MCF 10A (cell line): ENCODE measurements at regions of chr6 and their contacts with region 1.

Region 1: DNA sequence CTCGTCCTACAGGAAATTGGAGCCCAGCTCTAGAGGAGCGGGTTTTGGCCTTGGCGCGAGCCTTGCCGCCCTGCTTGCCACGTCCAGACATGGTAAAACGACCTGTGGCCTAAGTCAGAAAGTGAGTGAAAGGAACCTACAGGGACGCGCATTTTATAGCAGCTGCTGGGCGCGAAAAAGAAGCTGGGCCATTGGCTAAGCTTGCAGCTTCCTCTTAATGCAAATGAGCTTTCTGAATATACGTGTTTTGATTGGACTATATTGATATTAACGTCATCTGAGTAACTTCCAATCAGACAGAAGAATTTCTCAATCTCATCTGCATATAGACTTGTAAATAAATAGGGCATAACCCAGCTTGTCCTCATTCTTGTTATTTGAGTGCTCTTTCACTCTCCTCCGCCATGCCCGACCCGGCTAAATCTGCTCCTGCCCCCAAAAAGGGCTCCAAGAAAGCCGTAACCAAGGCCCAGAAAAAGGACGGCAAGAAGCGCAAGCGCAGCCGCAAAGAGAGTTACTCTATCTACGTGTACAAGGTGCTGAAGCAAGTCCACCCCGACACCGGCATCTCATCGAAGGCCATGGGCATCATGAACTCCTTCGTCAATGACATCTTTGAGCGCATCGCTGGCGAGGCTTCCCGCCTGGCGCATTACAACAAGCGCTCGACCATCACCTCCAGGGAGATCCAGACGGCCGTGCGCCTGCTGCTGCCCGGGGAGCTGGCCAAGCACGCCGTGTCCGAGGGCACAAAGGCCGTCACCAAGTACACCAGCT is 18.9 kb downstream of the OR2B2 start:
- DNase-seq: peak; percentile 98
- H3K4me3 Mint-ChIP-seq: no peak overlapping the region
- H3K27ac Mint-ChIP-seq: no peak overlapping the region
- H3K4me1 Mint-ChIP-seq: peaks cover 12% of the 10 kb centered on the region
- H3K27me3 Mint-ChIP-seq: no peaks in the 10 kb centered on the region
- CTCF ChIP-seq: no peak

Region 2: GRCh38 chr6:27132532-27133280 is 760.5 kb before region 1 on chr6:
- CTCF ChIA-PET with region 1: interaction called, 3 read pairs
- POLR2A ChIA-PET with region 1: interaction called, 82 read pairs
- intact Hi-C with region 1: loop called (anchors 1 kb)
- DNase-seq: peak; percentile 99
- H3K4me3 Mint-ChIP-seq: no peak overlapping the region
- H3K27ac Mint-ChIP-seq: no peak overlapping the region
- H3K4me1 Mint-ChIP-seq: peaks cover 11% of the 10 kb centered on the region
- H3K27me3 Mint-ChIP-seq: no peaks in the 10 kb centered on the region
- CTCF ChIP-seq: no peak

Region 3: DNA sequence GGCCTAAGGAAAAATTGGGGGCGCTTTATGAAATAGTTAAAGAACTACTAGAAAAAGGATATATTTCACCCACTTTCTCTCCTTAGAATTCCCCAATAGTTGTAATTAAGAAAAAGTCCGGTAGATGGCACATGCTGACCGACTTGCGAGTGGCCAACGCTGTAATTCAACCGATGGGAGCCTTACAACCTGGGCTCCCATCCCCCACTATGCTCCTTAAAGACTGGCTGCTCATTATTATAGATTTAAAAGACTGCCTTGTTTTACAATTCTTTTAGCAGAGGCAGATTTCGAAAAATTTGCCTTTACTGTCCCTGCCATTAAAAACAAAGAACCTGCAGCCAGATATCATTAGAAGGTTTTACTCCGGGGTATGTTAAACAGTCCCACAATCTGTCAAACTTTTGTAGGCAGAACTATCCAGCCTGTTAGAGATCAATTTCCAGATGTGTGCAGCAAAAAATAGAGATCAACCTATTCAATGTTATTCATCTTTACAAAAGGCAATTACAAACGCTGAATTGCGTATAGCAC is 704.3 kb before region 1 on chr6:
- CTCF ChIA-PET with region 1: interaction called, 3 read pairs
- POLR2A ChIA-PET with region 1: interaction called, 11 read pairs
- intact Hi-C with region 1: loop called (anchors 2 kb)
- DNase-seq: peak; percentile 88
- H3K4me3 Mint-ChIP-seq: peak overlapping the region; percentile 82
- H3K27ac Mint-ChIP-seq: peak overlapping the region; percentile 53
- H3K4me1 Mint-ChIP-seq: no peaks in the 10 kb centered on the region
- H3K27me3 Mint-ChIP-seq: no peaks in the 10 kb centered on the region
- CTCF ChIP-seq: peak; percentile 80

Region 4: GRCh38 chr6:27687154-27688013 is 205.9 kb before region 1 on chr6:
- CTCF ChIA-PET with region 1: no interaction called
- POLR2A ChIA-PET with region 1: no interaction called
- intact Hi-C with region 1: no loop called
- DNase-seq: peak; percentile 87
- H3K4me3 Mint-ChIP-seq: peak overlapping the region; percentile 92
- H3K27ac Mint-ChIP-seq: peak overlapping the region; percentile 89
- H3K4me1 Mint-ChIP-seq: peaks cover 5% of the 10 kb centered on the region
- H3K27me3 Mint-ChIP-seq: no peaks in the 10 kb centered on the region
- CTCF ChIP-seq: peak; percentile 86

Region 5: GRCh38 chr6:27700337-27700736 is 192.9 kb before region 1 on chr6:
- CTCF ChIA-PET with region 1: no interaction called
- POLR2A ChIA-PET with region 1: no interaction called
- intact Hi-C with region 1: no loop called
- DNase-seq: no peak
- H3K4me3 Mint-ChIP-seq: no peak overlapping the region
- H3K27ac Mint-ChIP-seq: no peak overlapping the region
- H3K4me1 Mint-ChIP-seq: peaks cover 6% of the 10 kb centered on the region
- H3K27me3 Mint-ChIP-seq: no peaks in the 10 kb centered on the region
- CTCF ChIP-seq: no peak

Region 6: DNA sequence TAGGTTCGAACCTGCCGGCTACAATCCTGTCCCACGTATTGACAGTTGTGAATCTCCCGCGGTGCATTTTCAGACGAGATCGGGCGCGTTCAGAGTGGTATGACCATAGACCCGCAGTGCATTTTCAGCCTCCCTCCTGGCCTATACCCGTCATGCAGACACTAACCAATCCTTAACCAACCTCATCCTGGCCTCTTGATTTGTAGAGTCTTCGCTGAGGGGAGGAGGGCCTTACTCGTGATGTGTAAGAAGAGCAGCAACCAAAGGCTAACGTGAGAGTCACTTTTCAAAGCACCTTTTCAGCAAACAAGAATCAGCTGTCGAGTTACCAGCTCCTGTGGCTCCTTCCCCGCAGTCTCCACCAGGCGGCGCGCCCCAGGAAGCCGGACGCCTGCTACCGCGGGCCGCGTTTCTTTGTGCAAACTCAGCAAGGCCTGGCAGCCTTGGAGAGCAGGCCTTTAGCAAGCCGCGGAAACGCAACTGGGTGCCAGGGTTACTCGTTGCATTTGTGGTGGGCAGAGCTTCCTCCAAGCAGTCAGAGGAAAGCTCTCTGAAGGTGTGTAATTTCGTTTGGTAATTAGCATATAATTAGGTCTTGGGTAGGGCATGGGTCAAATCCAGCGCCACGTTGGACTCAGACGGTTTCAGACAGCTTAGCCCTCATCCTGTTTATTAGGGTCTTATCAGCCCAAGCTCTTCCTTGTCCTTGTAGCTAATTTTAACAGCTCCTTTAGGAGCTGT is 120.8 kb before region 1 on chr6:
- CTCF ChIA-PET with region 1: interaction called, 9 read pairs
- POLR2A ChIA-PET with region 1: interaction called, 16 read pairs
- intact Hi-C with region 1: no loop called
- DNase-seq: peak; percentile 87
- H3K4me3 Mint-ChIP-seq: peak overlapping the region; percentile 53
- H3K27ac Mint-ChIP-seq: no peak overlapping the region
- H3K4me1 Mint-ChIP-seq: peaks cover 9% of the 10 kb centered on the region
- H3K27me3 Mint-ChIP-seq: no peaks in the 10 kb centered on the region
- CTCF ChIP-seq: peak; percentile 89

Region 7: GRCh38 chr6:27825025-27825793 is 68.0 kb before region 1 on chr6:
- CTCF ChIA-PET with region 1: interaction called, 74 read pairs
- POLR2A ChIA-PET with region 1: interaction called, 592 read pairs
- intact Hi-C with region 1: no loop called
- DNase-seq: no peak
- H3K4me3 Mint-ChIP-seq: peak overlapping the region; percentile 94
- H3K27ac Mint-ChIP-seq: peak overlapping the region; percentile 95
- H3K4me1 Mint-ChIP-seq: peaks cover 10% of the 10 kb centered on the region
- H3K27me3 Mint-ChIP-seq: no peaks in the 10 kb centered on the region
- CTCF ChIP-seq: no peak

Region 8: GRCh38 chr6:27864906-27865849 is 28.1 kb before region 1 on chr6:
- CTCF ChIA-PET with region 1: interaction called, 18 read pairs
- POLR2A ChIA-PET with region 1: interaction called, 644 read pairs
- intact Hi-C with region 1: loop called (anchors 2 kb)
- DNase-seq: peak; percentile 96
- H3K4me3 Mint-ChIP-seq: peak overlapping the region; percentile 91
- H3K27ac Mint-ChIP-seq: peak overlapping the region; percentile 97
- H3K4me1 Mint-ChIP-seq: no peaks in the 10 kb centered on the region
- H3K27me3 Mint-ChIP-seq: no peaks in the 10 kb centered on the region
- CTCF ChIP-seq: no peak

Region 9: GRCh38 chr6:28068067-28068466 is 174.8 kb after region 1 on chr6:
- CTCF ChIA-PET with region 1: no interaction called
- POLR2A ChIA-PET with region 1: no interaction called
- intact Hi-C with region 1: no loop called
- DNase-seq: no peak
- H3K4me3 Mint-ChIP-seq: no peak overlapping the region
- H3K27ac Mint-ChIP-seq: no peak overlapping the region
- H3K4me1 Mint-ChIP-seq: no peaks in the 10 kb centered on the region
- H3K27me3 Mint-ChIP-seq: peaks cover 70% of the 10 kb centered on the region
- CTCF ChIP-seq: no peak

Region 10: GRCh38 chr6:28355743-28356665 is 462.8 kb after region 1 on chr6:
- CTCF ChIA-PET with region 1: interaction called, 4 read pairs
- POLR2A ChIA-PET with region 1: interaction called, 31 read pairs
- intact Hi-C with region 1: no loop called
- DNase-seq: peak; percentile 87
- H3K4me3 Mint-ChIP-seq: peak overlapping the region; percentile 83
- H3K27ac Mint-ChIP-seq: peak overlapping the region; percentile 79
- H3K4me1 Mint-ChIP-seq: peaks cover 12% of the 10 kb centered on the region
- H3K27me3 Mint-ChIP-seq: no peaks in the 10 kb centered on the region
- CTCF ChIP-seq: peak; percentile 60